ENCODE measurements at regions of chr6 and their contacts with region 1.

Region 1: GRCh38 chr6:57116776-57117175 is 26.8 kb downstream of the ZNF451 start:
- DNase-seq: no peak
- H3K4me3 ChIP-seq: no peak overlapping the region
- H3K27ac ChIP-seq: no peak overlapping the region
- H3K4me1 ChIP-seq: no peaks in the 10 kb centered on the region
- H3K27me3 ChIP-seq: no peaks in the 10 kb centered on the region
- CTCF ChIP-seq: no peak
- POLR2A ChIP-seq: no peak

Region 2: GRCh38 chr6:56953597-56954402 is 163.0 kb before region 1 on chr6:
- CTCF ChIA-PET with region 1: no interaction called
- POLR2A ChIA-PET with region 1: no interaction called
- dilution Hi-C with region 1: no loop called
- intact Hi-C with region 1: no loop called
- DNase-seq: peak; percentile 19
- H3K4me3 ChIP-seq: peak overlapping the region; percentile 22 to 78 (median 43)
- H3K27ac ChIP-seq: peak overlapping the region; percentile 6
- H3K4me1 ChIP-seq: peaks cover 24% of the 10 kb centered on the region
- H3K27me3 ChIP-seq: no peaks in the 10 kb centered on the region
- CTCF ChIP-seq: no peak
- POLR2A ChIP-seq: no peak

Region 3: DNA sequence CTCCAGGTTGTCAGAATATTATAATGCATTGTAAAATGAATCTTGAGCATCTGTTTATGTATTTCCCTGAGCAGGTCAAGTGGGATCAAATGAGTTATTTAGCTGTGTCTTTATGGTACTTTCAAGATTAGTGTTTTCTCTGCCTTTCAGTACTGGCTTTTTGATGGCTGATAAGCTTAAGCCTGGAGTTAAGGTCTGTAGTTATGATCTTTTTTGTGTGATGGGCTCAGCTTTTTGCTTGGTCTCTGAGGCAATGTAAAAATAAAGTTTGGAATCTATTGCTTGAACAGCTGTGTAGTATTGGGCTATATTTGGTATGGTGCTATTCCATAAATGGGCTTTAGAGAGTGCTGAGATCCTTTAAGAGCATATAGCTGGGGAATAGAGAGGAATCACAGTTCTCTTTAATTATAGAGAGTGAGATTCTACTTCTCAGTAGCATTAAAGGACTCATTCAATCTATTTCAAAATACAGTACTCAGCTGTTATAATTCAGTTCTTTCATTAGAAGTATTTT is 13.9 kb after region 1 on chr6:
- CTCF ChIA-PET with region 1: interaction called, 10 read pairs
- POLR2A ChIA-PET with region 1: no interaction called
- dilution Hi-C with region 1: no loop called
- intact Hi-C with region 1: no loop called
- DNase-seq: no peak
- H3K4me3 ChIP-seq: no peak overlapping the region
- H3K27ac ChIP-seq: no peak overlapping the region
- H3K4me1 ChIP-seq: no peaks in the 10 kb centered on the region
- H3K27me3 ChIP-seq: no peaks in the 10 kb centered on the region
- CTCF ChIP-seq: no peak
- POLR2A ChIP-seq: no peak

Region 4: GRCh38 chr6:57432919-57433684 is 316.3 kb after region 1 on chr6:
- CTCF ChIA-PET with region 1: no interaction called
- POLR2A ChIA-PET with region 1: no interaction called
- dilution Hi-C with region 1: no loop called
- intact Hi-C with region 1: no loop called
- DNase-seq: no peak
- H3K4me3 ChIP-seq: no peak overlapping the region
- H3K27ac ChIP-seq: peak overlapping the region; percentile 37
- H3K4me1 ChIP-seq: peaks cover 18% of the 10 kb centered on the region
- H3K27me3 ChIP-seq: no peaks in the 10 kb centered on the region
- CTCF ChIP-seq: no peak
- POLR2A ChIP-seq: no peak

Measured in endothelial cell of umbilical vein (primary cell).